PC-9 (cell line): ENCODE measurements at regions of chr12 and their contacts with region 1.

Region 1: DNA sequence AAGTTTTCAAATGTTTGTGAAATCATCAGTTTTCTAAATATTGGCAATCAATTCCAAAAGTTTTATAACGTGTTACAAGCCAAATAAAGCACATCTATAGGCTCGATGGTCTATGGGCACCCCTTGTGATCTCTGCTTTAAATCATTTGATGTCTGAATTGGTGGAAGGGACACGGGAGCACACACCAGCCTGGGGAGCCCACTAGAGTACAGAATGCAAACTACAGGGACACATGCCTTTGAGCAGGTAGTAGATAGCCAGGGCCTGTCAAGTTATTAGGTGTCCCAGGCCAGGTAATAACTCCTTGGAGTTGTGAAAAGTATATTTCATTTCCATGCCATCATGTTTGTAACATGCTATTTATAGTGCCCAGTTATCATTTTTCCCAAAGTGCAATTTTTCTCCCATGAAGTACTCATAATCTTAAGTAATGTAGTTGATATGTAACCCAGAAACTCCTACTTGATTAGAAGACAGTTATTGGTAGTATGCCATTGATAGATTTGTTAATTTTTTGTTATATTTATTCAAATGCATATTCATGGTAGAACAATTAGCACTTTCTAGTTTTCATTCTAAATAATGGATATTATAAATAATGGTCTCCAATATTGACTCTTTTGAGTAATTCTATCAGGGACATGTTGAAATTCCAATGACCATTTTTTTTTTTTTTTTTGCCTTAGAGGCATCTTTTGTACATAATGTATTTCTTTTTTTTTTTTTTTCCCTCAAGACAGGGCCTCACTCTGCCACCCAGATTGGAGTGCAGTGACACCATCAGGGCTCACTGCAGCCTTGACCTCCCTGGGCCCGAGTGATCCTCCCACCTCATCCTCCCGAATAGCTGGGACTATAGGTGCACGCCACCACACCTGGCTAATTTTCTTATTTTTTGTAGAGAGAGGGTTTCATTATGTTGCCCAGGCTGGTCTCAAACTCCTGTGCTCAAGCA is 96.9 kb upstream of the FGD4 start:
- DNase-seq: no peak
- H3K4me3 ChIP-seq: no peak overlapping the region
- H3K27ac ChIP-seq: no peak overlapping the region
- H3K4me1 ChIP-seq: peaks cover 10% of the 10 kb centered on the region
- H3K27me3 ChIP-seq: no peaks in the 10 kb centered on the region
- CTCF ChIP-seq: peak; percentile 54

Region 2: GRCh38 chr12:31406345-31406744 is 896.2 kb before region 1 on chr12:
- CTCF ChIA-PET with region 1: interaction called, 27 read pairs
- POLR2A ChIA-PET with region 1: no interaction called
- intact Hi-C with region 1: loop called (anchors 2 kb)
- DNase-seq: no peak
- H3K4me3 ChIP-seq: no peak overlapping the region
- H3K27ac ChIP-seq: no peak overlapping the region
- H3K4me1 ChIP-seq: no peaks in the 10 kb centered on the region
- H3K27me3 ChIP-seq: no peaks in the 10 kb centered on the region
- CTCF ChIP-seq: no peak

Region 3: GRCh38 chr12:31682136-31682962 is 620.1 kb before region 1 on chr12:
- CTCF ChIA-PET with region 1: no interaction called
- POLR2A ChIA-PET with region 1: no interaction called
- intact Hi-C with region 1: loop called (anchors 1 kb)
- DNase-seq: peak; percentile 68 to 72
- H3K4me3 ChIP-seq: no peak overlapping the region
- H3K27ac ChIP-seq: no peak overlapping the region
- H3K4me1 ChIP-seq: no peaks in the 10 kb centered on the region
- H3K27me3 ChIP-seq: no peaks in the 10 kb centered on the region
- CTCF ChIP-seq: peak; percentile 87

Region 4: GRCh38 chr12:32062881-32063280 is 239.6 kb before region 1 on chr12:
- CTCF ChIA-PET with region 1: interaction called, 5 read pairs
- POLR2A ChIA-PET with region 1: no interaction called
- intact Hi-C with region 1: loop called (anchors 1 kb)
- DNase-seq: no peak
- H3K4me3 ChIP-seq: no peak overlapping the region
- H3K27ac ChIP-seq: no peak overlapping the region
- H3K4me1 ChIP-seq: no peaks in the 10 kb centered on the region
- H3K27me3 ChIP-seq: no peaks in the 10 kb centered on the region
- CTCF ChIP-seq: no peak

Region 5: DNA sequence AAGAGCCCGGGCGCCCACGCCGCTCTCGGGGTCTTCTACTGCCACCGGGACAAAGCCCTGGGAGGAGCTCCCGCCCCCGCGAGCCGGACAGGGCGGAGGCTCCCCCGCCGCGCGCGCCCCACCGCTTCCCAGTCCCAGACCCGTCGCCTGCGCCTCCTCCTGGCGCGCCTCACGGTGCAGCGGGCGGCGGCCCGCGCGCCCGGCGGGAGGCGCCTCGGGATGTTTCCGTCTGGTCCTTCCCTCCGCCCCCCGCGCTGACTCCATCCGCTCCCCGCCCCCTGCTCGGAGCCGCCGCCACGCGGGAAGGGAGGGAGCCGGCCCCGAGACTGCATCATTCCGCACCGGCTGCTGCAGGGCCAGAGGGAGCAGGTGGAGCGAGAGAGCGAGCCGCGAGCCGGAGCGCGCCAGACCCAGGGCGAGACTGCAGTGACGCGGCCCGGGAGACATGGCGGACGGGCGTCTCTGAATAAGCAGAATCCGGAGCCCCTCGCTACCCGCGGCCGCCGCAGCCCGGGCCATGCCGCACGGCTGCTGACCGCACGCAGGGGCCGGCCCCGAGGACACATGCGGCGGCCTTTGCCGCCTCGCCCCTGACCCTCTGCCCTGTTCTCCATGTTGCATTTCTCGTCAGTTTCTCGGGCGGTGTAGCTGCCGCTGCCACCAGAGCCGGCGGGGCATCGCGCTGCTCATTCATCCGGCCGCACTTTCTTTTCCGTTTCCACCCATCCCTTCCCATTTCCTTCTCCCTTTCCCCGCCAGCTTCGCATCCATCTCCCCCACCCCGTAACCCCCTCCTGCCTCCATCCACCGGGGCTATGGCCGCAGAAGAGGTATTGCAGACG is 195.8 kb before region 1 on chr12 and contains the start of gene BICD1:
- CTCF ChIA-PET with region 1: no interaction called
- POLR2A ChIA-PET with region 1: no interaction called
- intact Hi-C with region 1: loop called (anchors 2 kb)
- DNase-seq: peak; percentile 63 to 93
- H3K4me3 ChIP-seq: peak within 1 kb of the TSS; percentile 93
- H3K27ac ChIP-seq: peak within 1 kb of the TSS; percentile 71
- H3K4me1 ChIP-seq: peaks cover 27% of the 10 kb centered on the region
- H3K27me3 ChIP-seq: no peaks in the 10 kb centered on the region
- CTCF ChIP-seq: peak; percentile 12; the same call in 1 of the 2 replicates
- total RNA-seq, gene BICD1: 41.1 and 41.3 TPM in 2 replicates

Region 6: DNA sequence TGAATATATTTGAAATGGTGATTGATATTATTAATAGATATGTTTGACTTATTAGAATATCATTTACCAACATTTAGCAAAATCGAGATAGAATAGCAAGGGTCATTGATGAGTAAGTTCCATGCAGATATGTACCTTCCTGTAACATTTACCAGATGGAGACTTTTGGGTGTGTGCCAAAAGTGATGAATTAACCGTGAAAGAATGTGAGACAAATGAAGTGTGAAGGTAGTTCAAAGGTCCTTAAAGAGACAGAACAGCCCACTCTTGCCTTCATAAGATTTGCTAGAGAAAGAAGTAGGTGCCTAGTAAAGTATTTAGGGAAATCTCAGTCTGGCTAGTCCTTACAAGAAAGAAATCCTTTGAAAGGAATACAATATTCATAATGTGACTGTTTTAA is 142.4 kb after region 1 on chr12:
- CTCF ChIA-PET with region 1: no interaction called
- POLR2A ChIA-PET with region 1: no interaction called
- intact Hi-C with region 1: no loop called
- DNase-seq: peak; percentile 73 to 91
- H3K4me3 ChIP-seq: no peak overlapping the region
- H3K27ac ChIP-seq: peak overlapping the region; percentile 57
- H3K4me1 ChIP-seq: peaks cover 64% of the 10 kb centered on the region
- H3K27me3 ChIP-seq: no peaks in the 10 kb centered on the region
- CTCF ChIP-seq: no peak